ENCODE measurements at regions of chr16 and their contacts with region 1.

Region 1: DNA sequence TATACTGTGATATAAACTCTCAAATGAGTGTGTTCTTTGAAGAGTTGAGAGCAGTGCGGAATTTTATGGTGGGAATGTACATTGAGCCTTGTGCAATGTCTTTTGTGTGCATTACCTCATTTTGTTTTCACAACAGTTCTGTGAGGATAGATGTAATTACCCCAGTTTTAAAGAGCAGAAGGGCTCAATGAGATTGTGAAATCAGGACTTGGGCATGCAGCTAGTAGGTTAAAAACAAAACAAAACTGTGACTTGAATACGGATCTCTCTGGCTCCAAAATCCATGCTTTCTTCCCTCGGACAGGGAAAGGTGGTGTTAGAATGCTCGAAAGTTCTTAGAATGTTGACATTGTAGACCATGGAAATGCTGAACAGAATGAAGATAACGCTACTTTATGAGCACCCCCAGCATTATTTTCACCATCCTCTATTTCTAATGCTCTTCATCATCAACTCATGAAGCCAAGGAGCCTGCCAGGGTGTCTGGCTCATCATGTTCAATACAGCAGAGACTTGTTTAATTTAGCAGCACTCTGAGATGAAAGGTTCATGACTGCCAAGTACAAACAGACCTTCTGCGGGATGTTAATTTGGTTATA is 17.1 kb downstream of the MRTFB start:
- DNase-seq: no peak
- H3K4me3 ChIP-seq: no peak overlapping the region
- H3K27ac ChIP-seq: no peak overlapping the region
- H3K4me1 ChIP-seq: peaks cover 0 to 35% (median 9%) of the 10 kb centered on the region in 6 donors
- H3K27me3 ChIP-seq: no peaks in the 10 kb centered on the region
- CTCF ChIP-seq: no peak
- POLR2A ChIP-seq: no peak

Region 2: GRCh38 chr16:14013571-14014282 is 74.5 kb before region 1 on chr16:
- intact Hi-C with region 1: no loop called
- DNase-seq: no peak
- H3K4me3 ChIP-seq: no peak overlapping the region
- H3K27ac ChIP-seq: peak overlapping the region in 1 of 8 donors; percentile 11
- H3K4me1 ChIP-seq: peaks cover 0 to 6% (median 0%) of the 10 kb centered on the region in 6 donors
- H3K27me3 ChIP-seq: peaks cover 0 to 7% (median 0%) of the 10 kb centered on the region in 7 donors
- CTCF ChIP-seq: no peak
- POLR2A ChIP-seq: no peak

Region 3: DNA sequence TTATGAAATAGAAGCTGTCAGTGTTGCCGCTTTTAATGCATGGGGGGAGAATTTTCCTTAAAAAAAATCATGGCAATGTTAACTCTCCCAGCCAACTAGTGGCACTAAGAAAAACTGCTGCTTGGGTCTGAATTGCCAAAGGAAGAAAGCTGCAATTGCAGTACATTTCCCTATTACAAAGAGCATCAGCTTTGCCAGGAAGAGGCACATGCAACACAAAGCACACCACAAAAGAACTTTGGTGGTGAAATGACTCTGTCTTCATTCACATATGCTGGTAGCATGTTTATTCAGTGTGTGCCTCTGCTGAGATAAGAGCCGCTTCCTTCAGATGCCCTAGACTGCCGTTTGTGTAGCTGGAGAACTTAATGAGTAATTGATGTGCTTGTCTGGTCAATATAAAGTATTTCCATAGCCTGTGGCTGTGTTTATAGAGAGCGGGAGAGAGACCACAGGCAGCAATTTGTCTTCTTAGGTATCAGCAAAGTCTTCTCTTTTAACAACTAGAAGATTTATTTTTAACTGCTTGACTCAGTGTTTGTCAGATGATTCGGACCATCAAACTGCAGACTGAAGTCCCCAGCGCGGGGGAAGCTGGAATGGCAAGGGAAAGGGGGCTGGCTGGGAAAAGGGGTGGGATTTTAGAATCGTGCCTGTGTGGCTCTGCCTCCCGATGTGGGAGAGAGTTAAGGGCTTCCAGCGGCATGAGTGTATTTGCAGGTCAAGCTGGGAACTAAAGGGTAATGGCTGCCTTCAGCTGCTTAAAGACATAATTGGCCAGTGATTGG is 97.9 kb after region 1 on chr16:
- intact Hi-C with region 1: loop called (anchors 10 kb)
- DNase-seq: no peak
- H3K4me3 ChIP-seq: peak overlapping the region in 3 of 8 donors; percentile 7 to 37 (median 14)
- H3K27ac ChIP-seq: peak overlapping the region in 4 of 8 donors; percentile 16 to 41 (median 24)
- H3K4me1 ChIP-seq: peaks cover 0 to 24% (median 4%) of the 10 kb centered on the region in 6 donors
- H3K27me3 ChIP-seq: no peaks in the 10 kb centered on the region
- CTCF ChIP-seq: peak in 5 of 11 experiments; percentile 19 to 38 (median 28)
- POLR2A ChIP-seq: no peak

Region 4: DNA sequence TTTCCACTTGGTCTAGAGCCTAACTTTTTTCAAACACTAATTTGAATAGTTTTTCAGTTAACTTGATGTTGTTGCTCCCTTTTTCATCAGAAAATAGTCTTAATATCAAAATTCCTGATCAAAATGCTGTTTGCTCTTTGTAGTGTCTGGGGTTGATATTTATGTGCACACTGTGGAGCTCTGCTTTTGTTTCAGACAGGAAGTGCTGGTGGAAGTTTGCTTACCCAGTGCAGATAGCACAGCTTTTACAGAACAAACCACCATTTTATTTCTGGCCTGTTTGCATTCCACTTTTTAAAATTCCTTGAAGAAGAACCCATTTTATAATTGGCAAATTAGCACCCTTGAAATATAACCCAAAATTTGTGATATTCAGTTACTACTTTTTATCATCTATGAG is 108.3 kb after region 1 on chr16:
- intact Hi-C with region 1: no loop called
- DNase-seq: no peak
- H3K4me3 ChIP-seq: no peak overlapping the region
- H3K27ac ChIP-seq: peak overlapping the region in 6 of 8 donors; percentile 13 to 44 (median 31)
- H3K4me1 ChIP-seq: peaks cover 0 to 48% (median 16%) of the 10 kb centered on the region in 6 donors
- H3K27me3 ChIP-seq: no peaks in the 10 kb centered on the region
- CTCF ChIP-seq: no peak
- POLR2A ChIP-seq: no peak

Region 5: DNA sequence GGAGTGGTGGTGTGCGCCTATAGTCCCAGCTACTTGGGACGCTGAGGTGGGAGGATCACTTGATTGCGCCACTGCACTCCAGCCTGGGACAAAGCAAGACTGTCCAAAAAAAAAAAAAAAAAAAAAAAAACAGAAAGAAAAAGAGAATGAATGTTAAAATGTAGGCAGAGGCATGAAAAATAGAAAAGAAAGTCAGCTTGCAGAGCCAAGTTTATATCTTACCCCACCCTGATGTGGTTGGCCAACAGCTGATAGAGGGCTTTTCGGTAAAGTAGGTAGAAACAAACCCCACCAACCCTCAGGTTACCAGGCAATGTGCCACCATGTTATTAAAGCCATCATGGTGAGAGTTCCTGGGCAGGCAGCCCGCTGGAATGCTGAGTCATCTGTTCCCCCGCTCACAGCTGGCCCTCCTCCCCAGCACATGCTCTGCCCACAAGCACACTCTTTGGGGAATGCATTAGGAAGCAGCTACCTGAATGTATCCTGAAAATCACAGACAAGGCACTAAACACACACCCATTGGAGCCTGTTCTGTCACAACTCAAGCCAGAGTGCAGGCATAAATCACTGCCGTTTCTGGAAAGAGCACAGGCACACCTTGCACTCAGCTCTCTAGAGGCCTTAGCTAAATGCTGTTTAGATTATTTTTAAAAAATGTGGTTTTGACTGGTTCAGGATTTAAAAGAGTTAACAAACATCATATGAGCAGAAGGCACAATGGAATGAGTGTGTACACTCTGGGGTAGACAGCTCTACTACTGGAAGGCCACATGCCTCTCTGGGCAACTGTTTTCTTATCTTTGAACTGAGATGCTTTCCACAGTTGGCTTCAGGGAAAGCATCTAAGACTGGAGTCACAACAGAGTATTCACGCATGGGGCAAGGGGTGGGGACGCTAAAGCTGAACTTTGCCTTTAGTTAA is 413.3 kb after region 1 on chr16:
- intact Hi-C with region 1: no loop called
- DNase-seq: no peak
- H3K4me3 ChIP-seq: no peak overlapping the region
- H3K27ac ChIP-seq: peak overlapping the region in 3 of 8 donors; percentile 3 to 42 (median 41)
- H3K4me1 ChIP-seq: peaks cover 0 to 12% (median 0%) of the 10 kb centered on the region in 6 donors
- H3K27me3 ChIP-seq: no peaks in the 10 kb centered on the region
- CTCF ChIP-seq: no peak
- POLR2A ChIP-seq: no peak